Activated CD4-positive, alpha-beta memory T cell treated with anti-CD3 and anti-CD28 coated beads for 36 hours (primary cell): ENCODE measurements at regions of chr12 and their contacts with region 1.

Region 1: DNA sequence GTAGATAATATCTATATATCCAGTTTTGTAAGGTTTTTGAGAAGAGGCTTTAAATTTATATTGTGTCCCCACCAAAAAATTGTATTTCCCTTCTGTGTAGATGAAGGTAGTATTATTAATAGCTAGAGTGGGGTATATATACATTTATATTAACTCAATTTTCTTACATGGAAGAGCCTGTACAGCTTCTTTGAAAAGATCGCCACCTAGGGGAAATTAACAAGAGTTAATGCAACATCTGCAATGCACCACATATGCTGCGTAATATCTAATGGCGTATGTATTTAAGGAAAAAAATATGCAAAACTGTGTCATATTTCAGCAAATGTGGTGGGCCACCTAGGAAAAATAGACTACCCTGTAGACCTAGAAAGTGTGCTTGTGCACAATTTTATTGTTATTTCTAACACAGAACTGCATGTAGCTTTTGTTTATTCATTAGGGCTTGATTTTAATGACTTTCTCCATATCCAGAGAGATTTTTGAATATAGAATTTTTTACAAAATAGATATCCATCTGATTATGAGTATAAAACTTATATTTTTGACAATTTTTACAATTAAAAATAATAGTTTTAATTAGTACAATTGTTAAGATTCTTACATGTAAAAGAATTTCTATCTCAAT is 14.0 kb downstream of the CCER1 start:
- DNase-seq: no peak
- H3K4me3 Mint-ChIP-seq: no peak overlapping the region
- H3K27ac Mint-ChIP-seq: no peak overlapping the region
- H3K4me1 Mint-ChIP-seq: no peaks in the 10 kb centered on the region
- H3K27me3 Mint-ChIP-seq: peaks cover 6% of the 10 kb centered on the region

Region 2: DNA sequence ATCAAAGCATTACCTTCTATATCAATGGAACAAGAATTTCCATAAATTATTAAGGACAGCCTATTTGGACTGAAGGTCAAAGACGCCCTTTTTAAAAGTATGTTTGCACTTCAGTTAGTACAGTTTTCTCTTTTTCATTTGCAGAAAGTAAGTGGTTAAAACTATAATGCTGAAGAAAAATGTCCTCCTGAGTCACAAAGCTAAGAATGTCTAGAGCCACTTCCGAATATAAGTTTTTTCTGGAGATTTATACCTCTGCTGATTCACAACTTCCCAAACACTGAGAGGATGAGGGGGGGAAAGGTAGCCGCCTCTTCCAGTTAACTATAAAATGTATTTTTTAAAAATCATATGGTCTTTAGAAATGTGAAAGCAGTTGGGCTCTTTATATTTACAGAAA is 1673.6 kb before region 1 on chr12:
- CTCF ChIA-PET with region 1: no interaction called
- POLR2A ChIA-PET with region 1: no interaction called
- intact Hi-C with region 1: no loop called
- DNase-seq: no peak
- H3K4me3 Mint-ChIP-seq: no peak overlapping the region
- H3K27ac Mint-ChIP-seq: no peak overlapping the region
- H3K4me1 Mint-ChIP-seq: no peaks in the 10 kb centered on the region
- H3K27me3 Mint-ChIP-seq: no peaks in the 10 kb centered on the region

Region 3: GRCh38 chr12:90959538-90960139 is 18.7 kb after region 1 on chr12:
- CTCF ChIA-PET with region 1: interaction called, 18 read pairs
- POLR2A ChIA-PET with region 1: no interaction called
- intact Hi-C with region 1: loop called (anchors 1 kb)
- DNase-seq: no peak
- H3K4me3 Mint-ChIP-seq: no peak overlapping the region
- H3K27ac Mint-ChIP-seq: no peak overlapping the region
- H3K4me1 Mint-ChIP-seq: no peaks in the 10 kb centered on the region
- H3K27me3 Mint-ChIP-seq: no peaks in the 10 kb centered on the region

Region 4: DNA sequence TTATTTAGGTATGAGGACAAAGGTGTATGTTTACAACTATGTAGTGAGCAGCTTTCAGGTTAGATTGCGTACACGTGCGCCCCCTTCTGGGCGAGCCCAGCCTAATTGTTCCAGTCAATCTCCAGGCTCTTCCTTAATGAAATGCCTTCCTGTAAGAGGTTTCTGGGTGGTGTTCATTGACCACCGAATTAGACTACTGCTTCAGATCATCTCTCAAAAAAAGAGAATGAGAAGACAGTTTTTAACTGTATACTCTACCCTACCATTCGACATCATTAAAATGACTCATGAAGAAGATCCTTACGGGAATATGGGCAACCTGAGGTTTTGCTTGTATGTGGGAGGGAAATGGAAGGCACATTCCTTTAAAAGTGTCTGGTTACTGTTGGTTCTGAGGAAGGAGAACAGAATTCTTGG is 168.2 kb after region 1 on chr12:
- CTCF ChIA-PET with region 1: interaction called, 6 read pairs
- POLR2A ChIA-PET with region 1: no interaction called
- intact Hi-C with region 1: loop called (anchors 1 kb)
- DNase-seq: peak; percentile 71
- H3K4me3 Mint-ChIP-seq: no peak overlapping the region
- H3K27ac Mint-ChIP-seq: no peak overlapping the region
- H3K4me1 Mint-ChIP-seq: no peaks in the 10 kb centered on the region
- H3K27me3 Mint-ChIP-seq: peaks cover 3% of the 10 kb centered on the region

Region 5: DNA sequence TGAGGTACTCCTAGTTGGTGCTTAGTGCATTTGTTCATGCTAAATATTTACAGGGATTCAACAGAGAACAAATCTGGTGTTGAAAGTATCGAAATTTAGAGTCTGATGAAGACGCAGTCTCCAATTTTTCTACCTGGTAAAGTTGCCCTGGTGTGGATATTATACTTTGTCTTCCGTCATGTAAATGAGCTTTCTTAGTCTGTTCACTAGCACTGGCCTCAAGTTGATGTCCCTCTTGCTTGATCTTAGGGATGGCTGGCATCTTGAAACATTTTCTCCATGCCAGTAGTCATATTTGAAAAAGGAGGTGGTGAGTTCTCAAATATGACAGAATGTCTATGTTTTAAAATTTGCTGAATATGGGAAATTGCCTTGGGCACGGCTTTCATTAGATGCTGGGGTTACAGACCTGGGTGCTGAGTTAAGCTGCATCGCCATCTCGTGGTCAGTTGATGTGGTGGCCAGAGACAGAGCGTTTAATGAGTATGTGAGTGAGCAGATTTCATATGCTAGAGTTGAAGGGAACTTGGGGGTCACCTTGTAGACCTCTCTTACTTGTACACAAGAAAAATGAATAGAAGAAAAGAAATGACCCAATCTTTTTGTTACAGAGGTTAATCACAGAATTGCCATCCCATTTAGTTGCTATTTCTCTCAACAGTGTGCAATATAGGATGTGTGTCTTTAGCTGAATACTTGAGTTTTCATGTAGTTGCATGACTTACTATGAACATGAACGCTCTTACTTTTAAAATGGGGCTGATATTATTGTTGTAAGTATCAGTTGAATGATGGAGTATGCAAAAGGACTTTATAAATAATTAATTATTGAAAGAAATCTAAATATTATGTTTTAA is 414.4 kb after region 1 on chr12:
- CTCF ChIA-PET with region 1: interaction called, 8 read pairs
- POLR2A ChIA-PET with region 1: no interaction called
- intact Hi-C with region 1: loop called (anchors 1 kb)
- DNase-seq: peak; percentile 59
- H3K4me3 Mint-ChIP-seq: no peak overlapping the region
- H3K27ac Mint-ChIP-seq: no peak overlapping the region
- H3K4me1 Mint-ChIP-seq: no peaks in the 10 kb centered on the region
- H3K27me3 Mint-ChIP-seq: peaks cover 5% of the 10 kb centered on the region